Right ventricle myocardium inferior (tissue), 1 donor: ENCODE measurements at regions of chr2 and their contacts with region 1.

Region 1: GRCh38 chr2:98835831-98836385 is 100.1 kb downstream of the CRACDL start:
- DNase-seq: no peak
- ATAC-seq: no peak

Region 2: GRCh38 chr2:98649135-98649991 is 186.5 kb before region 1 on chr2:
- intact Hi-C with region 1: loop called (anchors 1 kb)
- DNase-seq: no peak
- ATAC-seq: peak; percentile 90

Region 3: DNA sequence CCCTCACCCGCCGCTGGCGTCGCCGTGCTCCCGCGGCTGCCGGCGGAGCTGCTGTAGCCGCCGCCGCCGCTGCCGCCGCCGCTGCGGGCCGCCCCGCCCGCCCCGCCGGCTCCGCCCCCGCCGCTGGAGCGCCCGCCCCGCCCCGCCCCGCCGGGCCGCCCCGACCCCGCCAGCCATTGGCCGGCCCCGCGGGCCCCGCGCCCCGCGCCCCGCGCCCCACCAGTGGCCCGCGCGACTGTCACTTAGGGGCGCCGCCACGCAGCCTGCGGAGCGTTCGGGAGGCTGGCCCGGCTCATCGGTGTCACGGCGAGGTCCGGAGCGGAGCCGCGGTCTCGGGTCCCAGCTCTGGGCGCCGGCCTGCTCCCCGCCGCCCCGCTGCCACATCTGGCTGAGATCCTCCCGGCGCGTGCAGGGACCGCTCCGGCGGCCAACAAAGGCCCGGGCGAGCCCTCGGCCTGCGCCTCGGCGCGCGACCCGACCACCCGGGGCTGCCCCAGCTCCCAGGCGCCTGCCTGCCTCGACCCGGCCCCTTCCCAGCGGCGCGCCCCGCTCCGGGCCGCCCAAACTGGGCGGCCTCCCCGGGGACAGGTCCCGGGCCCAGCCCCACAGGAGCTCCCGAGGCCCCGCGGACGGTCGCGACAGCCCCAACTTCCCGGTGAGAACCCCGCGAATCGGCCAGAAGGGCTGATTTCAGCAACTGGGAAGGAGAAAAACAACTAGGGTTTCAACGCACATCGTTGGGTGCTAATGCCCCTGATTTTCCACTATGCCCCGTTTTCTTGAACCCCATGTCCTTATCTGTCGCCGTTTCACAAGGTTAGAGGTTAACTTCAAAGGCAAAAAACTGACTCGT is 104.6 kb before region 1 on chr2 and contains the start of gene MGAT4A:
- intact Hi-C with region 1: loop called (anchors 5 kb)
- DNase-seq: peak; percentile 92
- ATAC-seq: peak; percentile 96
- total RNA-seq, gene MGAT4A: 19.3 TPM